AG04450 (cell line): ENCODE measurements at regions of chr6 and their contacts with region 1.

Region 1: GRCh38 chr6:128725271-128726233 is 157.4 kb upstream of the LAMA2 start:
- DNase-seq: no peak
- H3K4me3 ChIP-seq: no peak overlapping the region
- H3K27ac ChIP-seq: no peak overlapping the region
- H3K27me3 ChIP-seq: no peaks in the 10 kb centered on the region
- CTCF ChIP-seq: peak; percentile 61

Region 2: DNA sequence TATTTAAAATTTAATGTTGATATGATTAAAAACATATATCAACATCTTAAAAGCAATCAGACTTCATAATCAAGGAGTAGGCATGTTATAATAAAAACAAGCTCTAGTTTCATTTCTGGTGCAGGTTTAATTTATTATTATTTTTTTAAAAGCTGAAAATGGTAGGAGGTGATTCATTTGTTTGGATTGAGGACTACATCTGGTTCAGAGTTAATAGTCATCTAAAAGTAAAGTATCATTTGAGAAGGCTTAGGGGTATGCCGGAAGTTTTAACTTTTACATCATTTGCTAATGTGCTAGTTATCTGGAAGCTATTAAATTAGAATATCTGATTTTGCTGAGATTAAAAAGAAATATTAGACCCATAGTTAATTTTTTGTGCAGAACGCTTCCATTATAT is 12.1 kb before region 1 on chr6:
- CTCF ChIA-PET with region 1: interaction called, 10 read pairs
- POLR2A ChIA-PET with region 1: interaction called, 3 read pairs
- DNase-seq: no peak
- H3K4me3 ChIP-seq: no peak overlapping the region
- H3K27ac ChIP-seq: no peak overlapping the region
- H3K27me3 ChIP-seq: no peaks in the 10 kb centered on the region
- CTCF ChIP-seq: no peak

Region 3: GRCh38 chr6:128784266-128784665 is 58.7 kb after region 1 on chr6:
- CTCF ChIA-PET with region 1: no interaction called
- POLR2A ChIA-PET with region 1: no interaction called
- DNase-seq: no peak
- H3K4me3 ChIP-seq: no peak overlapping the region
- H3K27ac ChIP-seq: no peak overlapping the region
- H3K27me3 ChIP-seq: peaks cover 4% of the 10 kb centered on the region
- CTCF ChIP-seq: no peak